A673 (cell line): ENCODE measurements at regions of chr7 and their contacts with region 1.

Region 1: GRCh38 chr7:29285444-29285793 is 90.8 kb downstream of the CHN2 start:
- DNase-seq: peak; percentile 67
- H3K4me3 ChIP-seq: no peak overlapping the region
- H3K27ac ChIP-seq: no peak overlapping the region
- H3K4me1 ChIP-seq: peaks cover 45% of the 10 kb centered on the region
- H3K27me3 ChIP-seq: no peaks in the 10 kb centered on the region
- CTCF ChIP-seq: no peak

Region 2: GRCh38 chr7:29214056-29214455 is 71.4 kb before region 1 on chr7:
- CTCF ChIA-PET with region 1: no interaction called
- POLR2A ChIA-PET with region 1: no interaction called
- intact Hi-C with region 1: loop called (anchors 5 kb)
- DNase-seq: no peak
- H3K4me3 ChIP-seq: no peak overlapping the region
- H3K27ac ChIP-seq: no peak overlapping the region
- H3K4me1 ChIP-seq: peaks cover 24% of the 10 kb centered on the region
- H3K27me3 ChIP-seq: no peaks in the 10 kb centered on the region
- CTCF ChIP-seq: no peak